ENCODE measurements at regions of chr7 and their contacts with region 1.

Region 1: DNA sequence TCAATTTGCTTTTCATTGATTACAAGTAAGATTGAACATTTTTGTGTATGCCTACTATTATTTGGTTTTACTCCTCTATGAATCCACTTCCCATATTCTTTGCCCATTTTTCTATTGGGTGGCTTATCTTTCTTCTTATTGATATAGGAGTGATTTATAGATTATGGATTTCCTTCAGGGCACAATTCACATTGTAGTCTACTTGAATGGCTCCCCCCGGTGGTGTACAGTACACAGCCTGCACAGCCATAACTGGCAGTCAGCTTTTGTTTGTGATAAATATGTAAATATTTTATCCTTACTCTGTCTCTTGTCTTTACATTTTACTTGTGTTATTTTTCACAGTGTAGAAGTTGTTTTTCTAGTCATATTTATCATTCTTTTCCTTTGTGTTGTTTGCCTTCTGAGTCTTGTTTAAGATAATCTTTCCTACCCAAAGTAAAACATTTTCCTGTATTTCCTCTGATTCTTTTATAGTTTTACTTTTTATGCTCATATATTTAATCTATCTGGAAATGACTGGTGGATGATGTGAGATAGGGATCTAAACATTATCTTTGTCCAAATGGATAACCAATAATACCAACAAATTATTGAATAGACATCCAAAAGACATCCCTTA is 23.9 kb upstream of the CALD1 start:
- DNase-seq: peak; percentile 80
- H3K4me3 Mint-ChIP-seq: no peak overlapping the region
- H3K27ac Mint-ChIP-seq: no peak overlapping the region
- H3K4me1 Mint-ChIP-seq: peaks cover 7% of the 10 kb centered on the region
- H3K27me3 Mint-ChIP-seq: no peaks in the 10 kb centered on the region

Region 2: GRCh38 chr7:134632937-134633540 is 122.5 kb before region 1 on chr7:
- intact Hi-C with region 1: loop called (anchors 1 kb)
- DNase-seq: peak; percentile 79
- H3K4me3 Mint-ChIP-seq: no peak overlapping the region
- H3K27ac Mint-ChIP-seq: no peak overlapping the region
- H3K4me1 Mint-ChIP-seq: peaks cover 23% of the 10 kb centered on the region
- H3K27me3 Mint-ChIP-seq: peaks cover 16% of the 10 kb centered on the region

Region 3: DNA sequence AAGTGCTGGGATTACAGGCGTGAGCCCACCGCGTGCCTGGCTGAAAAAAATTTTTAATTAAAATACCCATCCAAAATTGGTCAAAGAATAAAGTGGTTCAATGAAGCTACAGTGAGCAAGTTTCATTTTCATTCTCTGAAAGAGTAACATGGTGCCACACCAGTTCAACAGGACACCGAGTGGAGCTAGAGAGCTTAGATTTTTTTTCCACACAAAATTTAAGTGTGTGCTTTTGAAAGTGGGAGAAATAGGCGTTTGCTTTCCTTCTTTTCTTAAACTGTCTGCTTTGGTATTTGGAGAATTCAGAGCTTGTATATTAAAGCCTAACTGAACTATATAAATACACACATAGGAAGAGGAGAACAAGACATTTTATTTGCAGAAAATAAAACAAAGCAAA is 65.5 kb before region 1 on chr7:
- intact Hi-C with region 1: loop called (anchors 1 kb)
- DNase-seq: peak; percentile 62
- H3K4me3 Mint-ChIP-seq: no peak overlapping the region
- H3K27ac Mint-ChIP-seq: no peak overlapping the region
- H3K4me1 Mint-ChIP-seq: peaks cover 11% of the 10 kb centered on the region
- H3K27me3 Mint-ChIP-seq: no peaks in the 10 kb centered on the region

Region 4: DNA sequence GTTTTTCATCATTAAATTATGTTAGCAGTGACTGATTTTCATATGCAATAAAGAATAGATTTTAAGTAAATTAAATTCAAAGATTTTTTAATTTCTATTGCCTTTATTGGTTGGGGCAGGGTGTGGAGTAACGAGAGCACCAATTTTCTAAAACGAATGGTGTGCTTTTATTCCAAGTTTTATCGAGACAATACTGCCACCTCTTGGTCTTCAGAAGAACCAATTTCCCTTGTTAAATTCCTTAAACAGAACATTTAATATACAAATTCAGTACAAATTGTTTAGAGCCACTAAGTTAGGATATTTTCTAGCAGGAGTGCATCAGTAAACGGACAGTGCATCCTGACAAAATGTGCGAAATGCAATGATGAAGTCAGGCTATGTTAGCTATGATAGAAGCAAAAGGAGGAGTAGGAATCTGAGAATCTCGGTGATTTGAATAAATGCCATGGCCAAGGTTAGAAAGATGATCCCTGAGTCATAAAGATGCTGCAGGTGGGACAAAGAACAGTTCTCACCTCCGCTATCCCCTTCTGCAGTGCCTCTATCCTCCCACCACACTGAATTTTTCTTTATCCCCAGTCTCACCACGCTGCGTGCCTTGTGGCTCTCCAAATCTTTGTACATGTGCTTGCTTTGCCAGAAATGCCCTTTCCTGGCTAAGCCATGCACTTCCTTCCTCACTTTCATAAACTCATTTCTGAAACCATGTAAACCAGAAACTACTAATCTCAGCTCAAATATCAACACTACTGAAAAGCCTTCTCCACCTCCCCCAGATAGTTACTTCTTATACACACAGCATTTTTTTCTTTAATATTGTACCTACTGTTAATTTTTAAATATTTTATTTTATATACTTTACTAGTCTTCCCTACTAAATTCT is 198.9 kb after region 1 on chr7:
- intact Hi-C with region 1: loop called (anchors 2 kb)
- DNase-seq: no peak
- H3K4me3 Mint-ChIP-seq: no peak overlapping the region
- H3K27ac Mint-ChIP-seq: no peak overlapping the region
- H3K4me1 Mint-ChIP-seq: peaks cover 4% of the 10 kb centered on the region
- H3K27me3 Mint-ChIP-seq: no peaks in the 10 kb centered on the region